ENCODE measurements at regions of chr15 and their contacts with region 1.

Region 1: DNA sequence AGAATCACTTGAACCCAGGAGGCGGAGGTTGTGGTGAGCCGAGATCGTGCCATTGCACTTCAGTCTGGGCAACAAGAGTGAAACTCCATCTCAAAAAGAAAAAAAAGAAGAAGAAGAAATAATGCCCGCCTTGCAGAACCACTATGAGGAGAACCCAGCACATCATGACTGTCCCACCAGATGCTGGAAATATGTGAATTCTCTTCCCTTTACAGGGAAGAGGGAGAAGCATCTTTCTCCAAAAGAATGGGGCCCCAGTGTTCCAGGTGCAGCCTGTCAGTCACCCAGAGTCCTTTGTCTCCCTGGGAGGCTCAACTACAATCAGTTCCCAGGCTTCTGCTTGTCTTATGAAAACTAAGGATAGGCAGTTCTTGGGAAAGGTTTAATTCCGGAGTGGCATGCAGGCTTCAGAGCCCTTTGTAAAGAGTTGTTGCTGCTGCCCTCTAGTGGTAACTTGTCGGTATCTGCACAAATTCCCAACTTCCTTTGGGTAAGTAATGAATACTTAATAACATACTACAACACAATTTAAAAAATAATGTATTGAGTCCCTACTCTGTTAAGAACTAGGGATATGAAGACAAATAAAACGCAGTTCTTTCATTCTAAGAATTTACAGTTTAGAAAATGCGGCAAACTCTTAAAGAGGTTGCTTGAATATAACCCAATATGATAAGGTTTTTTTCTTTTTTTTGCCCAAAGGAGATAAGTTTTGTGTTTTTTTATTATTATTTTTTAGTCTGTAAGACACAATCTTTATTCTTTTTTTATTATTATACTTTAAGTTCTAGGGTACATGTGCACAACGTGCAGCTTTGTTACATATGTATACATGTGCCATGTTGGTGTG is 18.6 kb upstream of the TICRR start:
- DNase-seq: peak; percentile 77
- ATAC-seq: peak; percentile 95
- H3K4me3 ChIP-seq: no peak overlapping the region
- H3K27ac ChIP-seq: no peak overlapping the region
- H3K4me1 ChIP-seq: no peaks in the 10 kb centered on the region
- H3K27me3 ChIP-seq: peaks cover 27% of the 10 kb centered on the region
- CTCF ChIP-seq: peak; percentile 79
- POLR2A ChIP-seq: no peak
- RAD21 ChIP-seq: peak; percentile 64

Region 2: GRCh38 chr15:89494935-89495637 is 61.6 kb before region 1 on chr15:
- CTCF ChIA-PET with region 1: no interaction called
- POLR2A ChIA-PET with region 1: no interaction called
- dilution Hi-C with region 1: no loop called
- in situ Hi-C with region 1: no loop called
- intact Hi-C with region 1: loop called (anchors 1 kb)
- DNase-seq: no peak
- ATAC-seq: no peak
- H3K4me3 ChIP-seq: no peak overlapping the region
- H3K27ac ChIP-seq: no peak overlapping the region
- H3K4me1 ChIP-seq: no peaks in the 10 kb centered on the region
- H3K27me3 ChIP-seq: peaks cover 57% of the 10 kb centered on the region
- CTCF ChIP-seq: peak; percentile 39
- POLR2A ChIP-seq: no peak
- RAD21 ChIP-seq: no peak